ENCODE measurements at regions of chr1 and their contacts with region 1.

Region 1: GRCh38 chr1:115771847-115772457 is 3.4 kb upstream of the CASQ2 start:
- DNase-seq: peak; percentile 53
- ATAC-seq: peak; percentile 97
- H3K4me3 ChIP-seq: no peak overlapping the region
- H3K27ac ChIP-seq: no peak overlapping the region
- H3K4me1 ChIP-seq: no peaks in the 10 kb centered on the region
- H3K27me3 ChIP-seq: no peaks in the 10 kb centered on the region; a peak in 2 of 4 replicates
- CTCF ChIP-seq: peak; percentile 67 to 77 (median 68)
- EP300 ChIP-seq: no peak
- POLR2A ChIP-seq: no peak
- RAD21 ChIP-seq: peak; percentile 96

Region 2: GRCh38 chr1:115138968-115139367 is 633.0 kb before region 1 on chr1:
- CTCF ChIA-PET with region 1: interaction called, 7 read pairs
- POLR2A ChIA-PET with region 1: no interaction called
- RAD21 ChIA-PET with region 1: interaction called, 3 read pairs
- SMC1A ChIA-PET with region 1: interaction called, 3 read pairs
- in situ Hi-C with region 1: loop called (anchors 5 kb)
- intact Hi-C with region 1: loop called (anchors 5 kb)
- DNase-seq: peak; percentile 9
- ATAC-seq: peak; percentile 100
- H3K4me3 ChIP-seq: no peak overlapping the region
- H3K27ac ChIP-seq: no peak overlapping the region
- H3K4me1 ChIP-seq: no peaks in the 10 kb centered on the region
- H3K27me3 ChIP-seq: no peaks in the 10 kb centered on the region; a peak in 1 of 4 replicates
- CTCF ChIP-seq: peak; percentile 85 to 88 (median 86); a peak in 5 of 6 replicates
- EP300 ChIP-seq: no peak
- POLR2A ChIP-seq: no peak
- RAD21 ChIP-seq: peak; percentile 77

Region 3: GRCh38 chr1:115609021-115609420 is 162.9 kb before region 1 on chr1:
- CTCF ChIA-PET with region 1: interaction called, 34 read pairs
- POLR2A ChIA-PET with region 1: no interaction called
- RAD21 ChIA-PET with region 1: interaction called, 21 read pairs
- SMC1A ChIA-PET with region 1: interaction called, 19 read pairs
- in situ Hi-C with region 1: loop called (anchors 5 kb)
- intact Hi-C with region 1: loop called (anchors 2 kb)
- DNase-seq: no peak
- ATAC-seq: no peak
- H3K4me3 ChIP-seq: no peak overlapping the region
- H3K27ac ChIP-seq: no peak overlapping the region
- H3K4me1 ChIP-seq: no peaks in the 10 kb centered on the region
- H3K27me3 ChIP-seq: no peaks in the 10 kb centered on the region
- CTCF ChIP-seq: no peak
- EP300 ChIP-seq: no peak
- POLR2A ChIP-seq: no peak
- RAD21 ChIP-seq: no peak

Region 4: DNA sequence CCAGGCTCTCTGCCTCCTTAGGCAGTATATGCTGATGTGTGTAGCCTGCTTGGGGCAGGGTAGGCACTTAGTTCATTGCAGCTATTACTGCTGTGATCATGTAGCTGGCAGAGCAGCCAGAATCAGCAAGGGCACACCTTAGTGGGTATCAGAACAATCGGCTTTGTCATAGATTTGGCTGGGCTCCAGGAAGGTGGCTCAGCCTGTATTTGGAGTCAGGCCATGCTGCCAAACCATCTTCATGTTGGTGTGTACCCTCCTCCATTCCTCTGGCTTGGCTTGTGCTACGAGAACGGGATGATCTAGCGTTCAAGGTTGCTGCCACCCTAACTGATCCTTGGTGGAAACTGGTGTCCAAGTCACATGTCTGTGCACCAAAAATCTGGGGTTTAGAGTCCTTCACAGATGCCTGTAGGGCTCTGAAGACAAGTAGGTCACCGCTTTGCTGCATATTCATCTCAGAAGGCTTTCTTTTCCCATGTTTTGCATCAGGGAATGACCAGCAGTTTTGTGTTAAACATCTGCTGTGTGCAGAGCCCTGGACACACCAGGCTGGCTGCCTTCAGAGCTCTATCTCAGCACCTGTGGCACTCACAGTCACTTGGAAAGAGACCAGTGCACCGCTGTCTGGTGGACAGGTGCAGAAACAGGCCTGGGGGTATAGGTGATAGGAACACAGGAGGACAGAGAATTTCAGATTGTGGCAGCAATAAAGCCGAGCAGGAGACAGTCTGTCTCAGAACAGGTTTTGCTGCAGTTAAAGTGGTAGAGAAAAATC is 106.4 kb before region 1 on chr1:
- CTCF ChIA-PET with region 1: no interaction called
- POLR2A ChIA-PET with region 1: no interaction called
- RAD21 ChIA-PET with region 1: no interaction called
- SMC1A ChIA-PET with region 1: no interaction called
- in situ Hi-C with region 1: no loop called
- intact Hi-C with region 1: no loop called
- DNase-seq: no peak
- ATAC-seq: no peak
- H3K4me3 ChIP-seq: no peak overlapping the region
- H3K27ac ChIP-seq: no peak overlapping the region
- H3K4me1 ChIP-seq: no peaks in the 10 kb centered on the region
- H3K27me3 ChIP-seq: no peaks in the 10 kb centered on the region
- CTCF ChIP-seq: no peak
- EP300 ChIP-seq: no peak
- POLR2A ChIP-seq: no peak
- RAD21 ChIP-seq: no peak

Region 5: DNA sequence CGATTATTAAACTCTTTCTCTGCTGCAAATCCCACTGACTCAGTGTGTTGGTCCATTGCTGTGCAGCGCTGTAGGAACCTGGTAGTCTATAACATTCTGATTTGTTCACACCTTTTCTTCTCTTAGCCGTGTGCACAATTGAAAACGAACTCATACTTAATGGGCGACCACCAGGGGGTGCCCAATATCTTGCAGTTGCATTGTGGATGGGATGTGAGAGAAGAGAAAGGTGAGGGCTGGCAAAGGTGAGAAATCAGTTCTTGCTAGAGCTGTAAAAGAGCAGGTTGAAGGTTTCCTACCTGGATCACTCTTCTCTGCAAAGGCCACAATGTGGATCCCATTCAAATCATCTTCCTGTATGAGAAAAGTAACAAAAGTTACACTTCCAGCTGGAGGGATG is 54.4 kb before region 1 on chr1:
- CTCF ChIA-PET with region 1: interaction called, 72 read pairs
- POLR2A ChIA-PET with region 1: no interaction called
- RAD21 ChIA-PET with region 1: interaction called, 4 read pairs
- SMC1A ChIA-PET with region 1: interaction called, 21 read pairs
- in situ Hi-C with region 1: loop called (anchors 5 kb)
- intact Hi-C with region 1: loop called (anchors 1 kb)
- DNase-seq: no peak
- ATAC-seq: peak; percentile 83
- H3K4me3 ChIP-seq: no peak overlapping the region
- H3K27ac ChIP-seq: no peak overlapping the region
- H3K4me1 ChIP-seq: no peaks in the 10 kb centered on the region
- H3K27me3 ChIP-seq: no peaks in the 10 kb centered on the region; a peak in 2 of 4 replicates
- CTCF ChIP-seq: peak; percentile 58 to 61 (median 58); a peak in 5 of 6 replicates
- EP300 ChIP-seq: no peak
- POLR2A ChIP-seq: no peak
- RAD21 ChIP-seq: peak; percentile 93

Region 6: DNA sequence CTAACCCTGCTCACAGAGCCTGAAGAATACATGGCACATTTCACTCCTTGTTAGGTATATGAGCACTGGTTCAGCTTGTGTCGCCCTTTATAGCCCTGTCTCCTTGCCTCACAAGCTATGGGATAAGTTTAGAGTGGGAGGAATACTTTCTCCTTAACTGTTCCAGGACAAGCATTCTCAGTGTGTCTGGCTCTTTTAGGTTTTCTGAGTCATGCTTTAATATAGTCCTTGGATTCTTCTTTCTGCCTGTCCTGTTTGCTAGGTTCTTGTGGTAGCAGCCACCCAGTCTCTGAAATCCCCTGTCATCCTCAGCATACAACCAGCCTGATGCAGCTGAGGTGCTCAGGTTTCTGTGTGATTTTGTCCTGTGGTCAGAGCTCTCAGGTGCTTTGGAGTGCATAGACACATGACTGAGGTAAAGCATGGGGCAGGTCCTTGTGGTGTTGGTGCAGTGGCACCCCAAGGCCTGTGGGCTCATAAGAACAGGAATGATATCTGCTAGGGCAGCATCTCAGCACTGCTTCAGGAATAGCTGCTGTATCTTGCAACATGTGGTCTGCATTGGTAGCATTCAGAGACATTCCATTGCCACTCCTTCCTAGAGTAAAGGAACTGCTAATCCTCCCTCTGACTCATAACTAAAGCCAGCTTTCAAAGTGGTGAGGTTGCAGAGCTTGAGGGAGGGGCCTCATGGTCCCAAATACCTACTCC is 10.8 kb after region 1 on chr1:
- CTCF ChIA-PET with region 1: interaction called, 15 read pairs
- POLR2A ChIA-PET with region 1: no interaction called
- RAD21 ChIA-PET with region 1: no interaction called
- SMC1A ChIA-PET with region 1: interaction called, 4 read pairs
- in situ Hi-C with region 1: no loop called
- intact Hi-C with region 1: no loop called
- DNase-seq: no peak
- ATAC-seq: no peak
- H3K4me3 ChIP-seq: no peak overlapping the region
- H3K27ac ChIP-seq: no peak overlapping the region
- H3K4me1 ChIP-seq: no peaks in the 10 kb centered on the region
- H3K27me3 ChIP-seq: 0 out of 4 replicates have a peak, but pooled peaks cover 0 to 2% of the 10 kb centered on the region in 2 experiments
- CTCF ChIP-seq: no peak
- EP300 ChIP-seq: no peak
- POLR2A ChIP-seq: no peak
- RAD21 ChIP-seq: no peak

Measured in GM12878 (cell line).